Activated CD8-positive, alpha-beta T cell treated with anti-CD3 and anti-CD28 coated beads for 36 hours (primary cell): ENCODE measurements at regions of chr12 and their contacts with region 1.

Region 1: DNA sequence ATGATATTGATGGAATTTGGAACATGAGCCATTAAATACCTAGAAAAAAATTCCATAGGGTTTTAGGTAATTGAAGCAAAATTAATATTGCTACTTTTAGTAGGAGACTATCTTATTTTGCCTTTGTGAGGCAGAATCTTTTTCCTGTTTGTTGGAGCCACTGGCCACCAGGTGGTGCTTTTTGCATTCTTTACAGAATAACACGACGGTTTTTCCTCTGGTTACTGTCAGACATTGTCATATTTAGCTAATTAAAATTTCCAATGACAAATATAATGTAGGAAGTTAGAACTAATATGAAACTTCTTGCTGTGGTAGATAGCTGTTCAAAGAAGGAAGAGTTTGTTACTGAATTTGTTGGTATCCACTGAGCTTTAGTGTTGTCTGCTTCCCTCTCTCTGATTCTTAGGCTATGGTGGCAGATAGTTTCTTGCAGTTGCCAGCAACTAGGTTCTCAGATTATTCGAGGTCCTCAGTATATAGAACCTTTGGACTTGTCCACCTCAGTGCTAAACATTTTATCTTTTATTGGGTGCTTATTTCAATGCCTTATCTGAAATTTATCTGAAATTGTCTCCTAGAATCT is 25.7 kb downstream of the RAB21 start:
- DNase-seq: peak; percentile 62
- ATAC-seq: peak; percentile 37
- H3K4me3 Mint-ChIP-seq: no peak overlapping the region
- H3K27ac Mint-ChIP-seq: peak overlapping the region; percentile 60
- H3K4me1 Mint-ChIP-seq: peaks cover 6% of the 10 kb centered on the region
- H3K27me3 Mint-ChIP-seq: no peaks in the 10 kb centered on the region
- CTCF ChIP-seq: peak; percentile 76

Region 2: DNA sequence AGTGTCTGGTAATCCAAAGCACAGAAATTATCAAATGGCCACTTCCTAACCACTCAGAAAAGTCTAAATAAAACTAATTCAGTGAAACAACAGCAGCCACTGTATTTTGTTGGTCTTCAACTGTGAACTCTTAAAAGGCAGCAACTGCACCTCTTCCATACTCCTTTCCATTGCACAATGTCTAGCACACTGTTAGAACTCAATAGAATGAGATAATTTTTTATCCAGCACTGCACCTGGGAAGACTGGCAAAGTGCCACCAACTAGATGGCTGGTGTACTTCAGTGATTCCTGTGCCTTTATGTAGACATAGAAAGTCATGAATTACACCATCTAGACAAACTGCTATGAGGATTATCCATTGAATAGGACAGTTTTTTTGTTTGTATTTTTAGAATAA is 314.5 kb before region 1 on chr12:
- CTCF ChIA-PET with region 1: no interaction called
- POLR2A ChIA-PET with region 1: no interaction called
- intact Hi-C with region 1: no loop called
- DNase-seq: no peak
- ATAC-seq: no peak
- H3K4me3 Mint-ChIP-seq: no peak overlapping the region
- H3K27ac Mint-ChIP-seq: no peak overlapping the region
- H3K4me1 Mint-ChIP-seq: no peaks in the 10 kb centered on the region
- H3K27me3 Mint-ChIP-seq: peaks cover 9% of the 10 kb centered on the region
- CTCF ChIP-seq: no peak

Region 3: DNA sequence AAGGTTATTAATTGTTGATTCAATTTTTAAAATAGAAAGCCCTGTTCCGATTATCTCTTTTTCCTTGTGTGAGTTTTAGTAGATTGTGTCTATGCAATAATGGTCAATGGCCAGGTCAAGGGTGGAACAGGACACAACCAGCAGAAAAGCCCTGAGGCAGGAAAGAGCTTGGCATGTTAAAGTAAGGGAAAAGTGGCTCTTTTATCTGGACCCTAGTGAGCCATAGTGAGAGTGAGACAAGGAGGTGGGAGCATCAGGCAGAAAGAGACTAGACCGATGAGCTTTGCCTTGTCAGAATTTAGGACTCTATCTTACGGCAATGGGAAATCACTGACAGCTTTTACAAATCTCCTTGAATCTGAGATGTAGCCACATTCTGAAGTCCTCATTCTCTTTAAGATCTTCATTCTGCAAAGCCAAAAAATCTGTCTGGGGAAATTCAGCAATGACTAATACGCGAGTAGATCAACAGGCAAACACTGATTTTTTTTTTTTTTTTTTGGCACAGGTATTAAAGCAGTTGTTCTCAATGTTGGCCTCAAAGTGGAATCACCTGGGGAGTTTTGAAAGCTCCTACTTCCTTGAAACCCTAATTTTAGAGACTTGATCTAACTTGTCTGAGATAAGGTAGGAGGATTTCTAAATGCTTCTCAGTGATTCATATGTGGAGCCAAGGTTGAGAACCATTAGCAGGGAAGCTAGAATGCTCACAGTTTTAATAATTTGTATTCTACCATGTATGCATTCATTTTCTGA is 60.5 kb before region 1 on chr12:
- CTCF ChIA-PET with region 1: no interaction called
- POLR2A ChIA-PET with region 1: no interaction called
- intact Hi-C with region 1: no loop called
- DNase-seq: no peak
- ATAC-seq: no peak
- H3K4me3 Mint-ChIP-seq: no peak overlapping the region
- H3K27ac Mint-ChIP-seq: no peak overlapping the region
- H3K4me1 Mint-ChIP-seq: no peaks in the 10 kb centered on the region
- H3K27me3 Mint-ChIP-seq: no peaks in the 10 kb centered on the region
- CTCF ChIP-seq: no peak

Region 4: GRCh38 chr12:71766202-71766601 is 14.1 kb before region 1 on chr12:
- CTCF ChIA-PET with region 1: interaction called, 23 read pairs
- POLR2A ChIA-PET with region 1: no interaction called
- intact Hi-C with region 1: no loop called
- DNase-seq: no peak
- ATAC-seq: no peak
- H3K4me3 Mint-ChIP-seq: no peak overlapping the region
- H3K27ac Mint-ChIP-seq: no peak overlapping the region
- H3K4me1 Mint-ChIP-seq: peaks cover 62% of the 10 kb centered on the region
- H3K27me3 Mint-ChIP-seq: no peaks in the 10 kb centered on the region
- CTCF ChIP-seq: no peak

Region 5: DNA sequence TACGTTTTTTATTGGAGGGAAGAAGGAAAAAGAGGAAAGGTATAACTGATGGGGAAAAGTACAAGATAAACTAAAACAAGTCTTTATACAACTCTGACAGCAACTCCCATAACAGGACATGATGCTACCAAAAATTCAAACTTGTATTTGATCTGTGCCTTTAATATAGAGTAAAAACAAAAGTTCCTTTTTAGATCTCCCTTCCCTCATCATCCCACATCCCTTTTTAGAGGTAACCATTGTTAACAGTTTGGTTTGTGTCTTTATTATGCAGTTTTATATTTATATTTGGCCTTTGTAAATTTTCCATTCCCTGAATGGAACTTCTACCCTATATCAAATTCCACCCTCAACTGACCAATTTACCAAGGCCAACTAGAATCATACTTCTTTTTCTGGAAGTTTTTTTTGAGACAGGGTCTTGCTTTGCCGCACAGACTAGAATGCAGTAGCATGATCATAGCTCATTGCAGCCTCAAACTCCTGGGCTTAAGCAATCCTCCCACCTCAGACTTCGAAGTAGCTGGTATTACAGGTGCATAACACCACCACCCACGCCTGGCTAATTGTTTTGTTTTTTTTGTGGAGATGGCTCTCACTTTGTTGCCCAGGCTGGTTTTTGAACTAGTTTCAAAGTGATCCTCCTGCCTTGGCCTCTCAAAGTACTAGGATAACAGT is 11.3 kb after region 1 on chr12:
- CTCF ChIA-PET with region 1: interaction called, 12 read pairs
- POLR2A ChIA-PET with region 1: interaction called, 3 read pairs
- intact Hi-C with region 1: no loop called
- DNase-seq: no peak
- ATAC-seq: no peak
- H3K4me3 Mint-ChIP-seq: no peak overlapping the region
- H3K27ac Mint-ChIP-seq: peak overlapping the region; percentile 24
- H3K4me1 Mint-ChIP-seq: peaks cover 11% of the 10 kb centered on the region
- H3K27me3 Mint-ChIP-seq: no peaks in the 10 kb centered on the region
- CTCF ChIP-seq: no peak

Region 6: GRCh38 chr12:71799106-71799505 is 18.8 kb after region 1 on chr12:
- CTCF ChIA-PET with region 1: interaction called, 12 read pairs
- POLR2A ChIA-PET with region 1: interaction called, 3 read pairs
- intact Hi-C with region 1: no loop called
- DNase-seq: no peak
- ATAC-seq: no peak
- H3K4me3 Mint-ChIP-seq: no peak overlapping the region
- H3K27ac Mint-ChIP-seq: no peak overlapping the region
- H3K4me1 Mint-ChIP-seq: no peaks in the 10 kb centered on the region
- H3K27me3 Mint-ChIP-seq: peaks cover 1% of the 10 kb centered on the region
- CTCF ChIP-seq: no peak

Region 7: DNA sequence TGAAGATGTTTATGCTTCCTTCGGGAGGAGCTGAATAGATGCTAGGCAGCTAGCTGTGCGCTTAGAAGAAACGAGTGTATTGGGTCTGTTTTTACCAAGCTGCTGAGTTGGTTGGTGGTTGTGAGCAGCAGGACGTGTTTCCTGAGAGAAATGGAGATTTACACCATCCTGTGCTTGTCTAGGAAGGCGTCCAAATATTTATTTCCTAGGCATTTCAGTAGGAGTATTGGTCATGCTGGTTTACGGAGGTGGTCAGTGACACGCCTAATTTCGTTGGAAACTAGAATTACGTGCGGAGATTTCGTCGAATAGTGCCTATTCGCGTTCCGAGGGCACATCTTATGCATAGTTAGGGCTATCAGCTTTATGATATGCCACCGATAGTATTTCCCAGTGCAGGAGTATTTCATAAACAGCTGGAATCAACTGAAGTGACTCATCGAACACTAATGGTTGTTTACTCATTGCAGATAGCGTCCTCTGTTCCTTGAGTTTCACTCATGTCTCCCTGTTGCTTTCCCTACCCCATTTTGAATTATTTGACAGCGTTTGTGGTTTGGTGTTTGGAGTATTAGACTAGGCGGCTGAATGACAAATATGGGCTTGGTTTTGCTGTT is 60.0 kb after region 1 on chr12:
- CTCF ChIA-PET with region 1: interaction called, 30 read pairs
- POLR2A ChIA-PET with region 1: no interaction called
- intact Hi-C with region 1: loop called (anchors 5 kb)
- DNase-seq: peak; percentile 21
- ATAC-seq: peak; percentile 22
- H3K4me3 Mint-ChIP-seq: peak overlapping the region; percentile 93
- H3K27ac Mint-ChIP-seq: peak overlapping the region; percentile 97
- H3K4me1 Mint-ChIP-seq: peaks cover 32% of the 10 kb centered on the region
- H3K27me3 Mint-ChIP-seq: no peaks in the 10 kb centered on the region
- CTCF ChIP-seq: no peak

Region 8: DNA sequence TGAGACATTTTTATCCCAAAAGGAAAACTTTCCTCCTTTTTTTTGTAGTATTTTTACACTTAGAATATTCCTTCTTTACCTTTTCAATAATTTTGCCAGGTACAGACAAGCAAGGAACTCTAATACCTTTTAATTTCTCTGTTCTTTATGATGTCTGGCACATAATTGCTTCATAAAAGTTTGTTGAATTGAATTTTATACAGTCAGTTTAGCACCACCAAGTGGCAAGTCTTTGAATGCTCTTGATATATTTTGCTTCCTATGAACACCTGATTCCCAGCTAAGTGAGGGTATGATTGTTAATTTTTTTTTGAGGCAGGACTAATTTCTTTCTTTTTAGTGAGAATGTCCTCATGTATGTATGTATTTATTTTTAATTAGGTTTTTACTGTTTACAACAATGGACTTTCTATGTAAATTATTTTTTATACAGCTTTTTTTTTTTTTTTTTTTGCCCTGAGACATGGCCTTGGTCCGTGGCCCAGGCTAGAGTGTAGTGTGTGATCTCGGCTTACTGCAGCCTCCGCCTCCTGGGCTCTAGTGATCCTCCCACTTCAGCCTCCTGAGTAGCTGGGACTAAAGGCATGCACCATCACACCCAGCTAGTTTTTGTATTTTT is 66.1 kb after region 1 on chr12:
- CTCF ChIA-PET with region 1: interaction called, 30 read pairs
- POLR2A ChIA-PET with region 1: no interaction called
- intact Hi-C with region 1: loop called (anchors 5 kb)
- DNase-seq: no peak
- ATAC-seq: peak; percentile 60
- H3K4me3 Mint-ChIP-seq: no peak overlapping the region
- H3K27ac Mint-ChIP-seq: no peak overlapping the region
- H3K4me1 Mint-ChIP-seq: peaks cover 28% of the 10 kb centered on the region
- H3K27me3 Mint-ChIP-seq: no peaks in the 10 kb centered on the region
- CTCF ChIP-seq: peak; percentile 75

Region 9: GRCh38 chr12:71938728-71939385 is 158.5 kb after region 1 on chr12 and contains the start of gene TPH2:
- CTCF ChIA-PET with region 1: interaction called, 5 read pairs
- POLR2A ChIA-PET with region 1: no interaction called
- intact Hi-C with region 1: loop called (anchors 10 kb)
- DNase-seq: peak; percentile 64
- ATAC-seq: peak; percentile 78
- H3K4me3 Mint-ChIP-seq: no peak within 1 kb of the TSS
- H3K27ac Mint-ChIP-seq: no peak within 1 kb of the TSS
- H3K4me1 Mint-ChIP-seq: peaks cover 4% of the 10 kb centered on the region
- H3K27me3 Mint-ChIP-seq: peaks cover 42% of the 10 kb centered on the region
- CTCF ChIP-seq: peak; percentile 56
- total RNA-seq, gene TPH2: not detected